ENCODE measurements at regions of chr4 and their contacts with region 1.

Region 1: GRCh38 chr4:100569196-100569595 is 51.4 kb upstream of the EMCN start:
- DNase-seq: no peak
- H3K4me3 ChIP-seq: no peak overlapping the region
- H3K27ac ChIP-seq: no peak overlapping the region
- H3K4me1 ChIP-seq: no peaks in the 10 kb centered on the region
- H3K27me3 ChIP-seq: no peaks in the 10 kb centered on the region
- CTCF ChIP-seq: no peak
- POLR2A ChIP-seq: no peak

Region 2: GRCh38 chr4:99921174-99921573 is 648.0 kb before region 1 on chr4:
- intact Hi-C with region 1: no loop called
- DNase-seq: no peak
- H3K4me3 ChIP-seq: no peak overlapping the region
- H3K27ac ChIP-seq: no peak overlapping the region
- H3K4me1 ChIP-seq: no peaks in the 10 kb centered on the region
- H3K27me3 ChIP-seq: no peaks in the 10 kb centered on the region
- CTCF ChIP-seq: no peak
- POLR2A ChIP-seq: no peak

Region 3: GRCh38 chr4:100657187-100657586 is 88.0 kb after region 1 on chr4:
- intact Hi-C with region 1: loop called (anchors 5 kb)
- DNase-seq: no peak
- H3K4me3 ChIP-seq: no peak overlapping the region
- H3K27ac ChIP-seq: no peak overlapping the region
- H3K4me1 ChIP-seq: no peaks in the 10 kb centered on the region
- H3K27me3 ChIP-seq: no peaks in the 10 kb centered on the region
- CTCF ChIP-seq: no peak
- POLR2A ChIP-seq: no peak

Region 4: DNA sequence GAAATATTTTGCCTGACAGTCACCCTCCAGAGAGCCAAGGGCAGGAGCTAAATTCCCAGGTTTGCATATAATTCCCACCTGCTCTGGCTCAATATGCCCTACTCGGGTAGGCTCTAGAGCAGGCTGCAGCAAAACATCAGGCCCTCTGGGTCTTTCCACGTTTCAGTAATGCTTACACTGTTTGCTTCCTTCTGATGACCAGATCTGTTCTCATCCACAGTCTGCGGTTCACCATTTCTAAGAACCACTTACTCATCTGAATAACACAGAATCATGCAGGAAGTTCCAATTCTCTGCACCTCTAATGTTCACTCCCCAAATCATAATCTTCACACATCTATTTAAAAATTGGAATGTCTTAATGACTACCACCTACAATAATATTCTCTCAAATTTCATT is 636.7 kb after region 1 on chr4:
- intact Hi-C with region 1: no loop called
- DNase-seq: no peak
- H3K4me3 ChIP-seq: no peak overlapping the region
- H3K27ac ChIP-seq: no peak overlapping the region
- H3K4me1 ChIP-seq: no peaks in the 10 kb centered on the region
- H3K27me3 ChIP-seq: no peaks in the 10 kb centered on the region
- CTCF ChIP-seq: no peak
- POLR2A ChIP-seq: no peak